ENCODE measurements at regions of chr1 and their contacts with region 1.

Region 1: DNA sequence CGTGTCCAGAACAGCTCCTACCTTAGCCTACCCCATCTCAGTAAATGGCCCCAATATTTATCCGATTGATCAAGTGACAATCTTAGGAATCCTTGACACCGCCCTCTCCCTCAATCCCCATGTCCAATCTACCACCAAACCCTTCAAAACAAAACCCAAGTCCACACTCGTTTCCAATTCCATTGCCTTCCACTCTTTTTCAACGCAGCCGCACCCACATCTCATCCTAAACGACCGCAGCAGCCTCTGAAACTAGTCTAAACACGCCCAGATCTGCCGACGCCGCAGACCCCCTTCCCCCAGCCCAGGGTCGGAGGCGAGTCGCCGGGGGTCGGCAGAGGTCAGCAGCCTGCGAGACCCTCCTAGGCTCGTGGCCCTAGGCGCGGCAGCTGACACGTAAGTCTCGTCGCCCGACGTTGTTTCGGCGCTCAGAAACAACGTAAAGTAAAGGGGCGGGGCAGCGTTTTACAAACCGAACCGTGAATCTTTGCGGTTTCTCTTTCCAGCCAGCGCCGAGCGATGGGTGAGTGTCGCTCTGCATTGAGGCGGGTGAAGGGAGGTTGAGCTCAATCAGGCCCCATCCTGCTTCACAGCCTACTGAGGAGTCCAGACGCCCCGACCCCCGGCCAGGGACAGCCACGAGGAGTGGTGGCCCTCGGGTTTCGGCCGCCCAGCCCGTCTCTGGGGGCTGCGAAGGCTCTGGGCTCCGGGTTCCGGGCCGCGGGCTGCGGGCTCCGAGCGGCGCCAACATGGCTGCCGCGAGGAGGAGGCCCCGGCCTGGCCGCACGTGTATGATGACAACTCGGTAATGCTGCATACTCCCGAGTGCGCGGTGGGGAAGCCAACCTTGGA is at the start of gene RPS8:
- DNase-seq: peak; percentile 94
- H3K4me3 Mint-ChIP-seq: peak within 1 kb of the TSS; percentile 83
- H3K27ac Mint-ChIP-seq: peak within 1 kb of the TSS; percentile 81
- H3K4me1 Mint-ChIP-seq: peaks cover 38% of the 10 kb centered on the region
- H3K27me3 Mint-ChIP-seq: no peaks in the 10 kb centered on the region
- total RNA-seq, gene RPS8: 2,983 to 3,047 TPM

Region 2: GRCh38 chr1:44739361-44740178 is 35.7 kb before region 1 on chr1 and contains the start of gene KIF2C:
- CTCF ChIA-PET with region 1: no interaction called
- POLR2A ChIA-PET with region 1: interaction called, 13 read pairs
- intact Hi-C with region 1: loop called (anchors 1 kb)
- DNase-seq: peak; percentile 99
- H3K4me3 Mint-ChIP-seq: peak within 1 kb of the TSS; percentile 93
- H3K27ac Mint-ChIP-seq: peak within 1 kb of the TSS; percentile 93
- H3K4me1 Mint-ChIP-seq: peaks cover 24% of the 10 kb centered on the region
- H3K27me3 Mint-ChIP-seq: no peaks in the 10 kb centered on the region
- total RNA-seq, gene KIF2C: 107 to 113 TPM

Region 3: GRCh38 chr1:44786138-44786840 is 11.0 kb after region 1 on chr1:
- CTCF ChIA-PET with region 1: interaction called, 32 read pairs
- POLR2A ChIA-PET with region 1: interaction called, 70 read pairs
- intact Hi-C with region 1: loop called (anchors 1 kb)
- DNase-seq: peak; percentile 83
- H3K4me3 Mint-ChIP-seq: peak overlapping the region; percentile 73
- H3K27ac Mint-ChIP-seq: peak overlapping the region; percentile 31
- H3K4me1 Mint-ChIP-seq: peaks cover 31% of the 10 kb centered on the region
- H3K27me3 Mint-ChIP-seq: no peaks in the 10 kb centered on the region

Region 4: GRCh38 chr1:44807262-44808062 is 32.2 kb after region 1 on chr1 and contains the start of gene DYNLT4:
- CTCF ChIA-PET with region 1: interaction called, 4 read pairs
- POLR2A ChIA-PET with region 1: interaction called, 37 read pairs
- intact Hi-C with region 1: loop called (anchors 2 kb)
- DNase-seq: peak; percentile 95
- H3K4me3 Mint-ChIP-seq: peak within 1 kb of the TSS; percentile 73
- H3K27ac Mint-ChIP-seq: peak within 1 kb of the TSS; percentile 98
- H3K4me1 Mint-ChIP-seq: peaks cover 90% of the 10 kb centered on the region
- H3K27me3 Mint-ChIP-seq: no peaks in the 10 kb centered on the region
- total RNA-seq, gene DYNLT4: 0.40 to 0.41 TPM

Region 5: DNA sequence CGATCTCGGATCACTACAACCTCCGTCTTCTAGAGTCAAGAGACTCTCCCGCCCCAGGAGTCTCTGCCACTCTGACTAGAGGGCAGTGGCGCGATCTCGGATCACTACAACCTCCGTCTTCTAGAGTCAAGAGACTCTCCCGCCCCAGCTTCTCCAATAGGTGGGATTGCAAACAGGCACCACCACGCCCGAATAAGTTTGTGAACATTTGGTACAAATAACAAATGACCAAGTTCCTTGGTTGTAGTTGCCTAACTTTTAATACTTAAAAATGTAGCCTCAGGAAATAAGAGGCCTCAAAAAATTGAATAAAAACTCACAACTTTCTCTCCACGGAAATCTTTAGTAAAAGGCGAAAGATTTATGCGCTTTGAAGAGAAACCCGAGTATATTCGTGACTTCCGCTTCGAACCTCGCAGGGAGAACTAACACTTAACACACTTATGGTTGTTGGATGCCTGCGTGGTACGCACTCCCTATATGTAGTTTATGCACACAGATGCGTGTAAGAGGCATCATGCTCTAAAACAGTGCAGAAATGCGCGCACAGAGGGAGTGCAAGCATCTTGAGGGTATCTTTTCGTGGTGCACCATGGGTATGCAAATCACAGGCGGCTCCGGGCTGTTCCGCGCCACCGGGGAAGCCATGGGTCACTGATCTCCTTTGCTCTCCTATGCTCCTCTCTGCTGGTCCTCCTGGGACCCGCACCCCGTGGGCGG is 44.5 kb after region 1 on chr1:
- CTCF ChIA-PET with region 1: interaction called, 3 read pairs
- POLR2A ChIA-PET with region 1: interaction called, 24 read pairs
- intact Hi-C with region 1: no loop called
- DNase-seq: peak; percentile 89
- H3K4me3 Mint-ChIP-seq: peak overlapping the region; percentile 89
- H3K27ac Mint-ChIP-seq: peak overlapping the region; percentile 99
- H3K4me1 Mint-ChIP-seq: peaks cover 42% of the 10 kb centered on the region
- H3K27me3 Mint-ChIP-seq: no peaks in the 10 kb centered on the region

Measured in activated CD4-positive, alpha-beta memory T cell treated with anti-CD3 and anti-CD28 coated beads for 36 hours (primary cell).